ENCODE measurements at regions of chr11 and their contacts with region 1.

Region 1: GRCh38 chr11:13462901-13463778 is at the start of gene BTBD10:
- DNase-seq: peak; percentile 96
- ATAC-seq: peak; percentile 99
- H3K4me3 Mint-ChIP-seq: peak within 1 kb of the TSS; percentile 95
- H3K27ac Mint-ChIP-seq: peak within 1 kb of the TSS; percentile 99
- H3K4me1 Mint-ChIP-seq: peaks cover 40% of the 10 kb centered on the region
- H3K27me3 Mint-ChIP-seq: no peaks in the 10 kb centered on the region
- total RNA-seq, gene BTBD10: 20.1 to 25.4 TPM

Region 2: DNA sequence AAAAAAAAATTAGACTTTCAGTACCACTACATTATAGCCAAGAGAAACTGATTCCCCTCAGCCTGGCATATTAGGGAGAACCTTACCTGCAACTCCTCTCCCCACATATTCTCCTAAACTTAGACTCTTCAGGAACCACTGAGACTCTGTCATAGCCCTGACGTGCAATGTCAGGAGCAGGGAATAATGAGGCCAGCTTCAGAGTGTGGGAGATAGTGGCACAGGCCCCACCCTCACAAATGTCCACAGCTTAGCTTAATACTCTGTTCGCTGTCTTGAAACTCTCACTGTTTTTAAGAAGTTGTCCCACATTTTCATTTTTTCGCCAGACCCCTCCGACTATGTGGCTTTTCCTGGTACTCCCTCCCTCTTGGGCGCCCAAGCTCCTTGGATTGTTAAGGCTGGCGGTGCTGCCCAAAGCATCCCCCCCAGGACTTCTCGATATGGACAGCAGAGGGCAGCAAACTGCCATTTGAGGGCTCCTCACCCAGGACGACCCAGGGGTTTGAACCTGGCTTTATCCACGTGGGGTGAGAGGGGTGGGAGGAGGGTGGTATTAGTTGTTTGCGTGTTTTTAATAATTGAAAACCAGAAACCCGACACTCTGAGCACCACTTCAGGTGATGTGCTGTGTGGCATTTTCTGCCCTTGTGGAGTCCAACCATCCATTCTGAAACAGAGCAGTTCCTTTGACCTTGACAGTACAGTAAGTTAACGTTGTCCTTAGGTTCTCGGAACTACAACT is 499.2 kb before region 1 on chr11:
- CTCF ChIA-PET with region 1: no interaction called
- POLR2A ChIA-PET with region 1: no interaction called
- intact Hi-C with region 1: loop called in 1 of 2 experiments (anchors 2 kb)
- DNase-seq: peak; percentile 78
- ATAC-seq: peak; percentile 89
- H3K4me3 Mint-ChIP-seq: no peak overlapping the region
- H3K27ac Mint-ChIP-seq: no peak overlapping the region
- H3K4me1 Mint-ChIP-seq: no peaks in the 10 kb centered on the region
- H3K27me3 Mint-ChIP-seq: peaks cover 22% of the 10 kb centered on the region

Region 3: DNA sequence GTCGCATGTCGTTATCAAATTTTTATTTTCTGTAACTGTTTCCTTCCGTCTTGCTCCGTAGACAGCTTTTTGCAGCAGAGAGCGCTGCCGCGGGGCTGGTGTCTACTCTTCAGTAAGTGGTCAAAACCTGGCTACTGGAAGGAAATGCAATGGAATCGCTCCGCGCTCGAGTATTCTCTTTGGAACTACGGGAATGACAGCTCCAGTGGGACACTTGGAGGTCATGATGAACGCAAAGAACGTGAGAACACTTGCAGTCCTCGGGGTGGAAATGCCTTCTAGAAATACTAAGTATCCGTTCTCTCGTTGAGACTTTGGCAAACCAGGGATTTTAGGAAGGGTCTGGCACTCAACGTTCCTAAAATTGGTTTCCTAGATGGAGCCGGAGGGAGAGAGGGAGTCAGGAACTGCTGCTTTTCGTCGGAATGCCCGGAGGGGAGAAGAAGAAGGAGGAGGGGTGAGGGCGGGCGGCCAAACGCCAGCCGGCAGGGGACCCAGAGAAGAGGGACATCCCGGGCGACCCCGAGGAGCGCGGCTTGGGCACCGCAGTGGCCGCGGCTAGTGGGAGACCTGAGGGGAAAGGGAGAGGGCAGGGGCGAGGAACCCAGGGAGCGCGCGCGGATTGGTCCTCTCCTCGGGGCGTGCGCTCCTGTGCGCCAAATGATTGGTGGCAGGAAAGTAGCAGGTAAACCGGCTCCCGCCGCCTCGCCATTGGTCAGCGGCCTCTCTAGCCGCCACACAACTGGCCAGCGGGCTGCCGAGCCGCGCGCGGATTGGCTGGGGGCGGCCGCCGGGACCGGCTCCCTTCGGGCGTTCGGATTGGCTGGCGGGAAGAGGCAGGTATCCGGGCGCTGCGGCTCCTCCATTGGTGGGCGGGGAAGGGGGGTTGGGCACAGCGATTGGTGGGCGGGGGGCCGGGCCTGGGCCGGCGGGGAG is 186.0 kb before region 1 on chr11:
- CTCF ChIA-PET with region 1: no interaction called
- POLR2A ChIA-PET with region 1: no interaction called
- intact Hi-C with region 1: loop called (anchors 1 kb)
- DNase-seq: peak; percentile 98
- ATAC-seq: peak; percentile 93
- H3K4me3 Mint-ChIP-seq: peak overlapping the region; percentile 87
- H3K27ac Mint-ChIP-seq: peak overlapping the region; percentile 84
- H3K4me1 Mint-ChIP-seq: peaks cover 43% of the 10 kb centered on the region
- H3K27me3 Mint-ChIP-seq: peaks cover 6% of the 10 kb centered on the region

Region 4: GRCh38 chr11:13486926-13487660 is 24.0 kb after region 1 on chr11:
- CTCF ChIA-PET with region 1: interaction called, 11 read pairs
- POLR2A ChIA-PET with region 1: no interaction called
- intact Hi-C with region 1: no loop called
- DNase-seq: peak; percentile 80
- ATAC-seq: peak; percentile 93
- H3K4me3 Mint-ChIP-seq: peak overlapping the region; percentile 50
- H3K27ac Mint-ChIP-seq: peak overlapping the region; percentile 71
- H3K4me1 Mint-ChIP-seq: peaks cover 4% of the 10 kb centered on the region
- H3K27me3 Mint-ChIP-seq: peaks cover 1% of the 10 kb centered on the region

Region 5: GRCh38 chr11:14075118-14076078 is 612.3 kb after region 1 on chr11:
- CTCF ChIA-PET with region 1: no interaction called
- POLR2A ChIA-PET with region 1: no interaction called
- intact Hi-C with region 1: loop called in 1 of 2 experiments (anchors 10 kb)
- DNase-seq: peak; percentile 82
- ATAC-seq: peak; percentile 96
- H3K4me3 Mint-ChIP-seq: peak overlapping the region; percentile 37
- H3K27ac Mint-ChIP-seq: peak overlapping the region; percentile 37
- H3K4me1 Mint-ChIP-seq: peaks cover 58% of the 10 kb centered on the region
- H3K27me3 Mint-ChIP-seq: no peaks in the 10 kb centered on the region

Measured in activated CD4-positive, alpha-beta T cell treated with anti-CD3 and anti-CD28 coated beads for 36 hours (primary cell).